ENCODE measurements at regions of chr15 and their contacts with region 1.

Region 1: DNA sequence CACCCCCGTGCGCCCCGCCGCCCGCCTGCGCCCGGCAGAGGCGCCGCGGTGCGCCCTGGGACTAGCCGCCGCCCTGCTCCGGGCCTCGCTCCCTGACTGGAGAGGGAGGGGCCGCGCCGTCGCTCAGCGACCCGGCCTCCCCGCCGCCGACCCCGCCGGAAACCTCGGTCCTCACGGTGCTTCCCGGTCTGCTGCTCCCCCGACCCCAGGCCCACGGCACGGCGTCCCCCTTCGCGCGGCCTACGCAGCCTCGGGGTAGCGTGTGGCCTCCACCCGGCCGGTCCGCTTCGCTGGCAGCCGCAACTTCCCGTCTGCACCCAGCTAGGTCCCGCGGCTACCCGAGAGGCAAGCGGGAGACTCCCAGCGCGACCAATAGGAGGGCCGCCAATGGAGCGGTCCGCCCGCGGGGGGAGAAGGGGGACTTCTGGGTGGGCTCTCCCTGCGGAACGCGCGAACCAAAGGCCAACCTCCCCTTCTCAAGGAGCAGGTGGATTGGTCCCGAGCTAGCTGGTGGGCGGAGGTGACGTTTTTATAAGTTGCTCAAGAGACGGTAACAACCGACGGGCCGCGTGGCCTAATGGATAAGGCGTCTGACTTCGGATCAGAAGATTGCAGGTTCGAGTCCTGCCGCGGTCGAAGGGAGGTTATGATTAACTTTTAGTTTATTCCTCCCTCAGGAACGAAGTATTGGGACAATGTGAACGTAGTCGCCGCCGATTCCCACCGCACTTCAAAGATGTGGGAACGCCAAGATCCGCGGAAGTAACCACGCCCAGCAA is at the start of gene POLG:
- DNase-seq: peak; percentile 99
- H3K4me3 ChIP-seq: peak within 1 kb of the TSS; percentile 94
- H3K27ac ChIP-seq: peak within 1 kb of the TSS; percentile 72
- H3K4me1 ChIP-seq: peaks cover 39% of the 10 kb centered on the region
- CTCF ChIP-seq: no peak
- total RNA-seq, gene POLG: 78.3 and 80.2 TPM in 2 replicates

Region 2: DNA sequence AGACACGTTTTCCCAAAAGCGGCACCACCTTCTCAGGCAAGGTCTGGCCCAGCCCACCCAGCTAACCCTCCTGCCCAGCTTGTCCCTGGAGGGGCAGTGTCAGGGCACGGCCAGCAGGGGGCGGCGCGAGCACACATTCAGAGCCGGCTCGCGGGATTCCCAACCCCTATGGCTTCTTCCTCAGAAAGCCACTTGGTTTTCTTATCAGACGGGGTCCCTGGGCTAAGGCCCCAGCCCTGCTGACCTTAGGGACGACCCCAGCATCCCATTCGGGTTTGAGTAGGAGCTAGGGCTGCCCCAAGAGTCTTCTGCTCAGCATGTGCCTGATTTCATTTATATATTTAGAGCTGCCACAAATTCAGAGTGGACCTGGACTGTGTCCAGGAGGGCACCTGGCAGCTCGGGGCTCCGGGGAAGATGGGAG is 127.8 kb before region 1 on chr15:
- CTCF ChIA-PET with region 1: no interaction called
- POLR2A ChIA-PET with region 1: no interaction called
- intact Hi-C with region 1: no loop called
- DNase-seq: peak; percentile 70
- H3K4me3 ChIP-seq: no peak overlapping the region
- H3K27ac ChIP-seq: no peak overlapping the region
- H3K4me1 ChIP-seq: no peaks in the 10 kb centered on the region
- CTCF ChIP-seq: peak; percentile 97

Region 3: DNA sequence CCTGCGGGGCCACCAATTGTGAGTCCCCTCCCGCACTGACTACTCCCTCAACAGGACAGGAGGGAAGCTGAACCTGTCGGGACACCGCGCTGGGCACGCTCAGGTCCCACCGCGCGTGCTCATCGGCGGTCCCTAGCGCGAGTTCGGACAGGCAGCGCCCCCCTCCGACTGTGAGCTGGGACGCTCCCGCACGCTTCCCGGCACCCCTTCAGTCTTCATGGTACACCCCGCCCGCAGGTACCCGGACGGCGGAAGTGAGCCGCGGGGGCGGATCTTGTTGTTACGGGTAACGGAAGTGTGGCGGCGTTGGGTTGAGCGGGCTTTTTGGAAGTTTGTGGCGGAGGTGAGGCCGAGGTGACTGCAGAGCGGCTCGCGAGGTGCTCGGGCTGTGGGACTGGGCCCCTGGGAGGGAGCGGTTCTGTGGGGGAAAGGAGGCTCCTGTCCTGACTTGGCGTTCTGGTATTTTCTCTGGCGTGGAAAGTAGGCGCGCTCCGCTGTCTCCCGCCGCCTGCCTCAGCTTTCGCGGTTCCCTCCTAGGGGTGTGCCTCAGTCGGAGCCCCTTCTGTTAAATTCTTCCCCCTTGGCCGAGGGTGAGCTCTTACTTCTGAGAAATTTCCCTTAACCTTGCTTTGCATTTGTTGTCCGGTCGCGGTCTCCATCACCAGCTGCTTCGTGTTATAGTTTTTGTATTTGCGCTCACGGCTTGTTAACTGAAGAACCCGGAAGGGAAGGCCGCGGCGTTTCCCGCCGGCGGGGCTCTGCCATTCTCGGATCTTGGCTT is 90.8 kb before region 1 on chr15 and contains the start of gene FANCI:
- CTCF ChIA-PET with region 1: no interaction called
- POLR2A ChIA-PET with region 1: interaction called, 3 read pairs
- intact Hi-C with region 1: loop called (anchors 1 kb)
- DNase-seq: peak; percentile 97
- H3K4me3 ChIP-seq: peak within 1 kb of the TSS; percentile 79
- H3K27ac ChIP-seq: peak within 1 kb of the TSS; percentile 88
- H3K4me1 ChIP-seq: peaks cover 20% of the 10 kb centered on the region
- CTCF ChIP-seq: peak; percentile 78
- total RNA-seq, gene FANCI: 112 and 118 TPM in 2 replicates

Region 4: DNA sequence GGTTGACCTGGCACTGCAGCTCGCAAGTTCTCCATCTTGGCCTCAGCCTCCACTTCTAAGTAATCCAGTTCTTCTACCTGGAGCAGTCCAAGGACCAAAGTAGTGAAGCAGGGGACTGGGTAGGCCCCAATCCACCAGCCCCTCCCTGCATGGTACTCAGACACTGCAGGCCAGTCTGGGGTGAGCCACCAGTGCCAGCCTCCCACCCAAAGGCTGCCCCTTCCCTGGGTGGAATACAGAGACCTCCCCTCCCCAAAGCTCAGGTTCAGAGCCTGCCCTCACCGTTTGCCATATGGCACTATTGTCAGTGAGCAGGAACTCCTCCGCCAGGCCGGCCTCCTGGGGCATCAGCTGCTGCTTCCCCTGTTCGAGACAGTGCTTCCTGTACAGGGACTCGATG is 10.9 kb before region 1 on chr15:
- CTCF ChIA-PET with region 1: no interaction called
- POLR2A ChIA-PET with region 1: no interaction called
- intact Hi-C with region 1: no loop called
- DNase-seq: no peak
- H3K4me3 ChIP-seq: no peak overlapping the region
- H3K27ac ChIP-seq: no peak overlapping the region
- H3K4me1 ChIP-seq: peaks cover 9% of the 10 kb centered on the region
- CTCF ChIP-seq: no peak

Region 5: DNA sequence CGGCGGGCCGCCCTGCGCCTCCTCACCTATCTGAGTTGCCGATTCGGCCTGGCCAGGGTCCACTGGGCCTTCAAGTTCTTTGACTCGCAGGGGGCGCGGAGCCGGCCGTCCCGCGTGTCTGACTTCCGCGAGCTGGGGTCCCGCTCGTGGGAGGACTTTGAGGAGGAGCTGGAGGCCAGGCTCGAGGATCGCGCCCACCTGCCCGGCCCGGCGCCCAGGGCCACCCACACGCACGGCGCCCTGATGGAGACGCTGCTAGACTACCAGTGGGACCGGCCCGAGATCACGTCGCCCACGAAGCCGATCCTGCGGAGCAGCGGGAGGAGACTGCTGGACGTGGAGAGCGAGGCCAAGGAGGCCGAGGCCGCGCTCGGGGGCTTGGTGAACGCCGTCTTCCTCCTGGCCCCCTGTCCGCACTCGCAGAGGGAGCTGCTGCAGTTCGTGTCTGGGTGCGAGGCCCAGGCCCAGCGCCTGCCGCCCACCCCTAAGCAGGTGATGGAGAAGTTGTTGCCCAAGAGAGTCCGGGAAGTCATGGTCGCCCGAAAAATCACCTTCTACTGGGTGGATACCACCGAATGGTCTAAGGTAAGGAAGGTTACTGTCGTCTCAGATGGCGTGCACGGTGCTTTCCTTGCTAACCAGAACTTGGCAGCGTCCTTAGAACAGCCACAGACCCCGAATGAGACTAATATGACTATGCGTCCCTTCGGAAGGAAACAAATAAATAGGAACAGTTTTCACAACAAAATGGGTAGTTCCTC is 241.1 kb after region 1 on chr15:
- CTCF ChIA-PET with region 1: no interaction called
- POLR2A ChIA-PET with region 1: no interaction called
- intact Hi-C with region 1: loop called (anchors 2 kb)
- DNase-seq: peak; percentile 25
- H3K4me3 ChIP-seq: peak overlapping the region; percentile 98
- H3K27ac ChIP-seq: peak overlapping the region; percentile 60
- H3K4me1 ChIP-seq: peaks cover 22% of the 10 kb centered on the region
- CTCF ChIP-seq: no peak

Region 6: GRCh38 chr15:90742087-90742486 is 1407.4 kb after region 1 on chr15:
- CTCF ChIA-PET with region 1: no interaction called
- POLR2A ChIA-PET with region 1: no interaction called
- intact Hi-C with region 1: no loop called
- DNase-seq: no peak
- H3K4me3 ChIP-seq: no peak overlapping the region
- H3K27ac ChIP-seq: no peak overlapping the region
- H3K4me1 ChIP-seq: peaks cover 5% of the 10 kb centered on the region
- CTCF ChIP-seq: no peak

Measured in OCI-LY7 (cell line).